Activated B cell treated with CpG ODN at 0.5 μM for 24 hours (primary cell): ENCODE measurements at regions of chr14 and their contacts with region 1.

Region 1: GRCh38 chr14:71403656-71404055 is 496.4 kb downstream of the PCNX1 start:
- DNase-seq: no peak
- ATAC-seq: peak; percentile 54
- H3K4me3 Mint-ChIP-seq: no peak overlapping the region
- H3K27ac Mint-ChIP-seq: peak overlapping the region; percentile 76
- H3K4me1 Mint-ChIP-seq: peaks cover 61% of the 10 kb centered on the region
- H3K27me3 Mint-ChIP-seq: no peaks in the 10 kb centered on the region
- CTCF ChIP-seq: no peak

Region 2: DNA sequence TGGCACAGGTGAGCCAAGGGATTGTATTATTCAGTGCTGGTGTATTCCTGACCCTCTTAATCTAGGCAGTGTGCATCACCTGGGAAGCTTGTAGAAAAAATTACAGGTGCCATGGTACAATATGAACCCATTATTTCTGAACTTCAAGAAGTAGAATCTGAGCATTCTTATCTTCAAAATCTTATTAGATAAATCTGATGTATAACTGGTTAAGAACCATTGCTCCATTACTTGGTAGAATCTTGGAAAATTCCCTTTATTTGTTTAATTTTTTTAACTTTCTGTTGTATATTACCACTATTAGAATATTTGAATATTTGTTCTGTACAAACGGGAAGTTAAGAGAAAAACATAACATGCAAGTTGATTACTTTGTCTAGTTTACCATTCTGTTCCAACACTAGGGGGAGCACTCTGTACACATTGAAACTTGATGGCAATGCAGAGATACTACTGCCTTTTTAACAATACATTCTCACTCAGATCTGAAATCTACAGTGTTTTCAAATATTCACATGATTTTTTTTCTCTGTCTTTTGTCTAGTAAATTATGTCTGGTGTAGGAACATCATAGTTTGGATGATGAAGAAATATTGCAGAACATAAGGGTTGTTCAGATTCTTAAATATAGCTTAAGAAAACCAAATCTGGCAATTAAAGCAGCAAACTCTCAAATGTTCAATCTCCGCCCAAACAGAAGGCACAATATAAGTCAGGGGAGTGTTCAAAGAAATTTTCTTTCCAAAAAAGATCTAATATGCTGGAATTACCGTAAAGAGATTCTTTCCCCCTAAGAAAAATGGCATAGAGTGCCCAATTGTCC is 299.8 kb before region 1 on chr14:
- CTCF ChIA-PET with region 1: interaction called, 18 read pairs
- POLR2A ChIA-PET with region 1: no interaction called
- intact Hi-C with region 1: loop called (anchors 1 kb)
- DNase-seq: no peak
- ATAC-seq: peak; percentile 73
- H3K4me3 Mint-ChIP-seq: no peak overlapping the region
- H3K27ac Mint-ChIP-seq: no peak overlapping the region
- H3K4me1 Mint-ChIP-seq: no peaks in the 10 kb centered on the region
- H3K27me3 Mint-ChIP-seq: no peaks in the 10 kb centered on the region
- CTCF ChIP-seq: peak; percentile 94

Region 3: DNA sequence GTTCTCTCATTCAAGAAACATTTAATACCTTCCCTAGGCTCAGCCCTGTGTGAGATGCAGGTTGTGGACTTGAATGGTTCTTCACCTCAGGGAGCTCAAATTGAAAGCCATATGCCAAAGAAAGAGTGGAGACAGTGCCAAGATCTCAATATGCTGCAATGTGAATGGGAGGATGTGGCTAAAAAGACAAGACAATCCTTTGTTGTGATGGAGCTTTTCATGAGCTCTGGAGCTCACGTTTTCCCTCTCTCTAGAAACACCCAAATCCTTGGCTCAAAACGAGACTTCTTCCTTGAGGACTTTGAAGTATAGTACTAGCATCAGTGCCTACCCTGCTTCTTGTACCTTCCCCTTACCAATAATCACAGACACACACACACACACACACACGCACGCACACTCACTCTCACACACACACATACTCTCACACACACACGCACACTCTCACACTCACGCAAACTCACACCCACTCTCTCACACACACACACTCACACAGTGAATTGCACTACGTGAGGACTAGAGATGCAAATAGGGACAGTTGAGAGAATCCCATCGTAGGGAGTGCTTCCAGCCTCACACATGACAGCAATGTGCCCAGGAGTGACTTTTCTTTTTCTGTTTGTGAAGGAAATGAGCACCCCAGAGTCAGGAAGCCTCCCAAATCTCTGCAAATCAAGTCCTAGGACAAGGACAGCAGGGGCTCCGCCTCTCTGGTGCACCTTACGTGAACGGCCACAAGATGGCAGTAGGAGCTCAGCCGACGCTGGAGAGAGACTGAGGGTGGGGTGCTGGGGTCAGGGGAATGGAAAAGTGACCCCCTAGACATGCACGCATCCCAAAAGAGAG is 265.0 kb before region 1 on chr14:
- CTCF ChIA-PET with region 1: interaction called, 35 read pairs
- POLR2A ChIA-PET with region 1: interaction called, 3 read pairs
- intact Hi-C with region 1: loop called (anchors 1 kb)
- DNase-seq: peak; percentile 42
- ATAC-seq: peak; percentile 84
- H3K4me3 Mint-ChIP-seq: no peak overlapping the region
- H3K27ac Mint-ChIP-seq: no peak overlapping the region
- H3K4me1 Mint-ChIP-seq: peaks cover 28% of the 10 kb centered on the region
- H3K27me3 Mint-ChIP-seq: no peaks in the 10 kb centered on the region
- CTCF ChIP-seq: peak; percentile 64

Region 4: GRCh38 chr14:71362920-71363584 is 40.6 kb before region 1 on chr14:
- CTCF ChIA-PET with region 1: interaction called, 9 read pairs
- POLR2A ChIA-PET with region 1: interaction called, 45 read pairs
- intact Hi-C with region 1: loop called (anchors 1 kb)
- DNase-seq: no peak
- ATAC-seq: peak; percentile 43
- H3K4me3 Mint-ChIP-seq: peak overlapping the region; percentile 66
- H3K27ac Mint-ChIP-seq: peak overlapping the region; percentile 97
- H3K4me1 Mint-ChIP-seq: peaks cover 85% of the 10 kb centered on the region
- H3K27me3 Mint-ChIP-seq: no peaks in the 10 kb centered on the region
- CTCF ChIP-seq: no peak

Region 5: GRCh38 chr14:71555654-71556559 is 152.3 kb after region 1 on chr14:
- CTCF ChIA-PET with region 1: no interaction called
- POLR2A ChIA-PET with region 1: interaction called, 8 read pairs
- intact Hi-C with region 1: loop called (anchors 1 kb)
- DNase-seq: no peak
- ATAC-seq: peak; percentile 94
- H3K4me3 Mint-ChIP-seq: peak overlapping the region; percentile 79
- H3K27ac Mint-ChIP-seq: peak overlapping the region; percentile 97
- H3K4me1 Mint-ChIP-seq: peaks cover 76% of the 10 kb centered on the region
- H3K27me3 Mint-ChIP-seq: no peaks in the 10 kb centered on the region
- CTCF ChIP-seq: no peak